ENCODE measurements at regions of chr2 and their contacts with region 1.

Region 1: GRCh38 chr2:159157361-159158209 is 128.9 kb downstream of the WDSUB1 start:
- DNase-seq: no peak
- H3K4me3 ChIP-seq: no peak overlapping the region
- H3K27ac ChIP-seq: peak overlapping the region in 1 of 4 donors; percentile 83
- H3K4me1 ChIP-seq: peaks cover 10 to 44% (median 35%) of the 10 kb centered on the region in 4 donors
- H3K27me3 ChIP-seq: no peaks in the 10 kb centered on the region
- CTCF ChIP-seq: no peak
- EP300 ChIP-seq: no peak
- POLR2A ChIP-seq: no peak

Region 2: GRCh38 chr2:159083566-159084202 is 73.9 kb before region 1 on chr2:
- in situ Hi-C with region 1: no loop called
- intact Hi-C with region 1: no loop called
- DNase-seq: no peak
- H3K4me3 ChIP-seq: no peak overlapping the region
- H3K27ac ChIP-seq: peak overlapping the region; percentile 31 to 57 (median 43)
- H3K4me1 ChIP-seq: peaks cover 0 to 26% (median 3%) of the 10 kb centered on the region in 4 donors
- H3K27me3 ChIP-seq: no peaks in the 10 kb centered on the region
- CTCF ChIP-seq: no peak
- EP300 ChIP-seq: no peak
- POLR2A ChIP-seq: no peak

Region 3: GRCh38 chr2:159168707-159169106 is 11.1 kb after region 1 on chr2:
- in situ Hi-C with region 1: no loop called
- intact Hi-C with region 1: no loop called
- DNase-seq: no peak
- H3K4me3 ChIP-seq: no peak overlapping the region
- H3K27ac ChIP-seq: no peak overlapping the region
- H3K4me1 ChIP-seq: peaks cover 0 to 5% (median 0%) of the 10 kb centered on the region in 4 donors
- H3K27me3 ChIP-seq: no peaks in the 10 kb centered on the region
- CTCF ChIP-seq: no peak
- EP300 ChIP-seq: no peak
- POLR2A ChIP-seq: no peak

Region 4: GRCh38 chr2:161077367-161078210 is 1920.0 kb after region 1 on chr2:
- in situ Hi-C with region 1: no loop called
- intact Hi-C with region 1: loop called (anchors 5 kb)
- DNase-seq: peak; percentile 20
- H3K4me3 ChIP-seq: no peak overlapping the region
- H3K27ac ChIP-seq: peak overlapping the region in 2 of 4 donors; percentile 24 to 50
- H3K4me1 ChIP-seq: peaks cover 0 to 12% (median 0%) of the 10 kb centered on the region in 4 donors
- H3K27me3 ChIP-seq: no peaks in the 10 kb centered on the region
- CTCF ChIP-seq: no peak
- EP300 ChIP-seq: no peak
- POLR2A ChIP-seq: no peak

Measured in transverse colon (tissue), 4 donors.